Psoas muscle (tissue), 8 donors: ENCODE measurements at regions of chr11 and their contacts with region 1.

Region 1: GRCh38 chr11:1298695-1299492 is 10.5 kb downstream of the TOLLIP start:
- DNase-seq: peak; percentile 89 to 94
- ATAC-seq: peak; percentile 79 to 86 (median 83)
- H3K4me3 ChIP-seq: peak overlapping the region; percentile 56
- H3K27ac ChIP-seq: peak overlapping the region; percentile 91
- H3K4me1 ChIP-seq: peaks cover 64% of the 10 kb centered on the region
- H3K27me3 ChIP-seq: no peaks in the 10 kb centered on the region
- CTCF ChIP-seq: no peak

Region 2: DNA sequence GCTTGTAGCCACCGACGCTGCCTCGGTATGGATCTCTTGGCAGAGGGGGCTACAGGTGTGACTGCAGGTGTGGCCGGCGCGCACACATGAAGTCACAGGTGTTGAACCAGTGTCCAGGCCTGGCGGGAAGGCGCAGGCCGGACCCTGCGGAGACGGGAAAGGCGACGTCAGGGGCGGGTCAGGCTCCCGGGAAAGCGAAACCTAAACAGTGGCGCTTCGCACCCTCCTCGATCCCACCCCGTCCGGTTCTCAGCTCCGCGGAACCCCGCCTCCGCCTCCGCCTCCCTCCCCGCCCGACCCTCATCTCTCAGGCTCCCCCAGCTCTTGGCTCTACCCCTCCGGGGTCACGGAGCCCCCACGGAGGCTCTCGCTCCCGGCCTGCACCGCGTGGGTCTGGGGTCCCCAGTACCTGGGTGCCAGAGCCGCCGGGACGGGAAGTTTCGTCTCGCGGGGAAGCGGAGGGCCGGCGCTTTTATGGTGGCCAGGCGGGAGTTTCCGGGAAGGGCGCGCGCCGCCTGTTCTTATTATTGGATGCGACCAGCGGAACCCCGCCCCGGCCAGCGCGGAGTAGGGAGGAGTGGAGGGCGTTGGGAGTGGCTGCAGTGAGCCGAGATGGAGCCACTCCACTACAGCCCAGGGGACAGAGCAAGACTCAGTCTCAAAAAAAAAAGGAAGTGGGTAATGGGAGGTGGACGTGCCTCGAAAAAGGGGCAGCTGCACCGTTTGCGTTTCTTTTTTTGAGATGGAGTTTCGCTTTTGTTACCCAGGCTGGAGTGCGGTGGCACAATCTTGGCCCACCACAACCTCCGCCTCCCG is 683.2 kb before region 1 on chr11 and contains the start of gene IRF7:
- intact Hi-C with region 1: no loop called
- DNase-seq: peak; percentile 96 to 97
- ATAC-seq: peak; percentile 63 to 76 (median 67)
- H3K4me3 ChIP-seq: peak within 1 kb of the TSS; percentile 85
- H3K27ac ChIP-seq: peak within 1 kb of the TSS; percentile 93
- H3K4me1 ChIP-seq: peaks cover 39% of the 10 kb centered on the region
- H3K27me3 ChIP-seq: no peaks in the 10 kb centered on the region
- CTCF ChIP-seq: no peak
- total RNA-seq, gene IRF7: 7.5 to 23.1 (median 15.2) TPM

Region 3: DNA sequence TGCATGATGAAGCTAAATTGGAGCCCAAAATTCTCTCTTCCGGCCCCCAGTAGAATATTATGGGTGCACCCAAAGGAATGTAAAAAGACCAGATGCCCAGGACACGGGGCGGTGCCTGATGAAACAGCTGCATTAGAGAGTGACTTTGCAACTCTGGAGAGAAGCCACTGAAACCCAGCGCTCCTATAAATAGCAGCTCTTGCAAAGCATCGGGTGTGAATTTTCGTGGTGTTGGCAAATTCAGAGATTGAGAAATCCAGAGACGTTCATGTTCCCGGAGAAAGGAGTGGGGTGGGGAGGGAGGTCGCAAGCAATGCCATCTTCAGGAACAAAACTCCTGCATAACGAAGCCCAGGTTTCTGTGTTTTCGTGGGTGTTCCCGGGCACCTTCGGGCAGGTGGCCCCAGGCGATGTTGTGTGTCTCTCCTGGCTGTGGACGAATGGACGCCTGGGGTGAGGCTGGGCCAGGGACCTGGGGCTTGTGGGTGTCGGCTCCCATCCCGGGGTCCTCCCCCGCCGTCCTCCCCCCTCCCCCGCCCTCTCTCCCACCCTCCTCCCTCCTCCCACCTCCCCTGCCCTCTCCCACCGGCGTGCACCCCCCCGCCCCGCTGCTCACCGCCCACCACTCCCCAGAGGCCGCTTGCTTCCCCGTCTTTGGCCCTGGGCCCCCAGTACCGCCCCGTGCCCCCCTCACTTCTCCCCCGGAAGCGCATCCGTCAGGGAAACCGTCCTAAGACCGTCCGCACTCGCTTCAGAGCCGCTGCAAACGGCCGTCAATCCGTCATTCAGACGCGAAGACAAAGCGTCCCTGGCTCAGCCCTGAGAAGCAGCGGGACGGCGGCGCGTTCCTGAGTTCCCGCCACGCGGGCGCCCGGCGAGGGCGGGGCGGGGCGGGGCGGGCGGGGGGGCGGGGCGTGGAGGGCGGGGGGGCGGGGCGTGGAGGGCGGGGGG is 37.2 kb after region 1 on chr11:
- intact Hi-C with region 1: loop called in 1 of 2 experiments (anchors 5 kb)
- DNase-seq: peak; percentile 84 to 92
- ATAC-seq: peak; percentile 85 to 89 (median 87)
- H3K4me3 ChIP-seq: peak overlapping the region; percentile 64
- H3K27ac ChIP-seq: peak overlapping the region; percentile 91
- H3K4me1 ChIP-seq: peaks cover 10% of the 10 kb centered on the region
- H3K27me3 ChIP-seq: no peaks in the 10 kb centered on the region
- CTCF ChIP-seq: no peak

Region 4: DNA sequence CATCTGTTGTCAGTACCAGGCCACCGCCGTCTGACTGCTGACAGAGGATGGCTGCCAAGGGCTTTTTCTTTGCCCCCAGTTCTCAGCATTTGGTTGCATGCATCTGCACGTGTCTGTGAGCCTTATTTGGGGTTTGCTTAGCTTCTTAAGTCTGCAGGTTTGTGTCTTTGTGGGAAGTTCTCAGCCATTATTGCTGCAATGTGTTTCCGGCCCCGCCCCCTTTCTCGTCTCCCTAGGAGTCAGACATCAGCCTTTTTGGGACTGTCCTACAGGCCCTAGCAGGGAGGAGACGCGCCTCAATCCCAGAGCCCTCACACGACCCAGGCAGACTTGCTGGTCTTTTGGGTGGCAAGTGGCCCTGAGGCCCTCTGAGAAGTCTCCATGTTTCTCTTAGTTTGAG is 179.7 kb after region 1 on chr11:
- intact Hi-C with region 1: no loop called
- DNase-seq: peak; percentile 12 to 51
- ATAC-seq: no peak
- H3K4me3 ChIP-seq: no peak overlapping the region
- H3K27ac ChIP-seq: no peak overlapping the region
- H3K4me1 ChIP-seq: peaks cover 26% of the 10 kb centered on the region
- H3K27me3 ChIP-seq: no peaks in the 10 kb centered on the region
- CTCF ChIP-seq: no peak

Region 5: GRCh38 chr11:1515082-1516060 is 216.5 kb after region 1 on chr11:
- intact Hi-C with region 1: loop called in 1 of 2 experiments (anchors 5 kb)
- DNase-seq: peak; percentile 84 to 91
- ATAC-seq: peak; percentile 91 to 96 (median 94)
- H3K4me3 ChIP-seq: no peak overlapping the region
- H3K27ac ChIP-seq: no peak overlapping the region
- H3K4me1 ChIP-seq: peaks cover 40% of the 10 kb centered on the region
- H3K27me3 ChIP-seq: no peaks in the 10 kb centered on the region
- CTCF ChIP-seq: peak; percentile 97

Region 6: DNA sequence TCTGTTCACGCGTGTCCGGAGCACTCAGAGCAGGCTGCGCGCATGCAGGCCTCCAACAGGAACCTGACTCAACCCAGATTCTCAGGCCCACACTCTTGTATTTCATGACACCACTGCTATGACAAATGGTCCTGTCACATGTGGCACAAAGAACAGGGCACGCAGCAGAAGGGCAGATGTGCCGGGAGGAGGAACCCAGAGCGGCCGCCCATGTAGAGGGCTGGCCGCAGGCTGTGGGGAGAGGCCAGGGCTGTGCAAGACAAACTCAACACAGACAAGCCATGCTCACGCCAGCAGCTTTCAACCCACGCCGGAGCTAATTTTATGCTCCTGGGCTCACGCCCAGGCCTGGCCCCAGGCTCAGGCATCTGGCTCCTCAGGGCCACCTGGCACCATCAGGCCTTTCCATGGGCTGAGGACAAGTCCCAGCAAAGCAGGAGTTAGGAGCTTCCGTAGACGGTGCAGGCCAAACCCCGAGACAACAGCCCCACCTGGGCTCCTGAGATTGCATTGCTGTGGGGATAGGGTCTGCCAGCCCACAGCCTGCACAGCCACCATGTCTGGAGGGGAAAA is 233.2 kb after region 1 on chr11:
- intact Hi-C with region 1: loop called in 1 of 2 experiments (anchors 2 kb)
- DNase-seq: peak; percentile 78 to 91
- ATAC-seq: peak; percentile 88 to 90 (median 90)
- H3K4me3 ChIP-seq: peak overlapping the region; percentile 15
- H3K27ac ChIP-seq: peak overlapping the region; percentile 89
- H3K4me1 ChIP-seq: peaks cover 89% of the 10 kb centered on the region
- H3K27me3 ChIP-seq: no peaks in the 10 kb centered on the region
- CTCF ChIP-seq: no peak